WTC11 (cell line): ENCODE measurements at regions of chr1 and their contacts with region 1.

Region 1: GRCh38 chr1:44721485-44722361 is 9.2 kb downstream of the RNU5D-1 start:
- DNase-seq: no peak
- ATAC-seq: peak; percentile 90
- H3K4me3 Mint-ChIP-seq: no peak overlapping the region
- H3K27ac Mint-ChIP-seq: peak overlapping the region; percentile 94
- H3K4me1 Mint-ChIP-seq: peaks cover 6% of the 10 kb centered on the region; the same call in 1 of the 2 replicates
- H3K27me3 Mint-ChIP-seq: peaks cover 3% of the 10 kb centered on the region
- CTCF ChIP-seq: no peak

Region 2: DNA sequence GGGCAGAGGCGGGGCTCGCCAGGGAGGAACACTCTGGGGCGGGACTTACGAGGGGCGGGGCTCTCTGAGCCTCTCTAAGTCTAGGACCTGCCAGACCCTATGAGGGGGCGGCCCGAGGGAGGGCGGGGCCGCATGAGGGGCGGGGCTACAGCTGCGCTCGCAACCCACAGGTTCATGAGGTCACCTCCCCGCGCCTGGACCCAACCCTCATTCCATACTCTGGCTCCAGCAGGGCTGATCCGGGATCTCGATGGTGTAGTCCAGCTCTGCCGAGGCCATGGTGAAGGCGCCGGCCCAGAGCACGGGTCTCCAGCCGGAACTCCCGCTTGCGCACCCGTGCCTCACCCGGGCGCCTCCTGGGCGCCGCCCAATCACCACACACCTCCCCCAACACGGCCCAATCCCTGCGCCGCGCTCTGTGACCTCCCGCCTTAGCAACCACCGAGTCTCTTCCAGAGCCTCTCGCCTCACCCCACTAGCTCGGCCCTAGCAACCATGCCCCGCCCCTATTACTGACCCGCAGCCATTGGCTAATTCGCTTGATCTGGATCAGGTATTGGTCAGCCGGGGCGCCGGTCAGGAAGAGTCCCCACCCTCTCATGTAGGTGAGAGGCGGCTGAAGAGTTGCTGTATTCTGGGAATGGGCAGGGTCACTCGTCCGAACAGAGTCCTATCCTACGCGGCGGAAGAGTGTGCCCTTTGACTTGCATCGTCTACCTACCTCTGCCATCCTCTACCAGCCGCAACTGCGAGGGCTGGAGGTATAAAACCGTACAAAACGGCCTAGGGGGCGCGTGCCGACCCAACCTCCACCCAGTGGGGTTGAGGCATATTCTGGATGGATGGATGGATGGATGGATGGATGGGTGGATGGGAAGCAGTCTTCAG is 47.4 kb before region 1 on chr1 and contains the starts of genes ARMH1 and TMEM53:
- CTCF ChIA-PET with region 1: interaction called, 6 read pairs
- POLR2A ChIA-PET with region 1: interaction called, 10 read pairs
- DNase-seq: peak; percentile 99
- ATAC-seq: peak; percentile 94
- H3K4me3 Mint-ChIP-seq: peak within 1 kb of the TSS; percentile 92
- H3K27ac Mint-ChIP-seq: peak within 1 kb of the TSS; percentile 80; the same call in 1 of the 2 replicates
- H3K4me1 Mint-ChIP-seq: peaks cover 23% of the 10 kb centered on the region
- H3K27me3 Mint-ChIP-seq: no peaks in the 10 kb centered on the region
- CTCF ChIP-seq: no peak
- total RNA-seq, gene ARMH1: 0.74 to 1.6 TPM (median 0.78 TPM) in 3 replicates
- total RNA-seq, gene TMEM53: 8.2 to 10.9 TPM (median 10.0 TPM) in 3 replicates

Region 3: DNA sequence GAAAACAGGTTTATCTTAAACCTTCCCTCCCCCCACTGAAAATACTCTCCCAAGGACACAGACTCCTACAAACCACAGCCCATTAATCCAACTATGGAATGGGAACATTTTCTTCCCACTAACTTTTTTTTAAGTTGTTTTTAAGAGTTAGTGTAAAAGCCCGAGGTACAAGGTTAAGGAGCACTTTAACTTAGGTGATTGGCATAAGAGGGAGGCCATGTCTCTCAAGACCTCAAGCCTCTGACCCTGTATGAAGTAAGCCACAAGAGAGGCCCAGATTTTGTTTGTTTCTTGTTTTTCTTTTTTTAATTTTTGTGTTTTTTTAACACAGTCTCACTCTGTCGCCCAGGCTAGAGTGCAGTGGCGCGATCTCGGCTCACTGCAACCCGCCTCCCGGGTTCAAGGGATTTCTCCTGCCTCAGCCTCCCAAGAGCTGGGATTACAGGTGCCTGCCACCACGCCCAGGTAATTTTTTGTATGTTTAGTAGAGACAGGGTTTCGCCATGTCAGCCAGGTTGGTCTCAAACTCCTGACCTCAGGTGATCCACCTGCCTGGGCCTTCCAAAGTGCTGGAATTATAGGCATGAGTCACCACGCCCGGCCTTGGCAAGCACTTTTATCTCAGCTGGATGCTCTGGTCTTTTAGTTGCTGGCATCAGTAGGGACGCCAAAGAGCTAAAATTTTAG is 32.8 kb before region 1 on chr1:
- CTCF ChIA-PET with region 1: no interaction called
- POLR2A ChIA-PET with region 1: no interaction called
- DNase-seq: no peak
- ATAC-seq: peak; percentile 26; the same call in 1 of the 2 replicates
- H3K4me3 Mint-ChIP-seq: no peak overlapping the region
- H3K27ac Mint-ChIP-seq: no peak overlapping the region
- H3K4me1 Mint-ChIP-seq: peaks cover 31% of the 10 kb centered on the region
- H3K27me3 Mint-ChIP-seq: no peaks in the 10 kb centered on the region
- CTCF ChIP-seq: no peak